ENCODE measurements at regions of chr1 and their contacts with region 1.

Region 1: GRCh38 chr1:160618763-160619274 is 28.0 kb downstream of the SLAMF1 start:
- DNase-seq: peak in 5 of 9 experiments; percentile 39 to 74 (median 43)
- ATAC-seq: peak; percentile 69
- H3K4me3 ChIP-seq: no peak overlapping the region
- H3K4me3 Mint-ChIP-seq: no peak overlapping the region
- H3K27ac ChIP-seq: no peak overlapping the region
- H3K27ac Mint-ChIP-seq: peak overlapping the region; percentile 49
- H3K4me1 ChIP-seq: peaks cover 13% of the 10 kb centered on the region
- H3K4me1 Mint-ChIP-seq: peaks cover 51% of the 10 kb centered on the region
- H3K27me3 ChIP-seq: no peaks in the 10 kb centered on the region
- H3K27me3 Mint-ChIP-seq: no peaks in the 10 kb centered on the region
- CTCF ChIP-seq: peak; percentile 77

Region 2: DNA sequence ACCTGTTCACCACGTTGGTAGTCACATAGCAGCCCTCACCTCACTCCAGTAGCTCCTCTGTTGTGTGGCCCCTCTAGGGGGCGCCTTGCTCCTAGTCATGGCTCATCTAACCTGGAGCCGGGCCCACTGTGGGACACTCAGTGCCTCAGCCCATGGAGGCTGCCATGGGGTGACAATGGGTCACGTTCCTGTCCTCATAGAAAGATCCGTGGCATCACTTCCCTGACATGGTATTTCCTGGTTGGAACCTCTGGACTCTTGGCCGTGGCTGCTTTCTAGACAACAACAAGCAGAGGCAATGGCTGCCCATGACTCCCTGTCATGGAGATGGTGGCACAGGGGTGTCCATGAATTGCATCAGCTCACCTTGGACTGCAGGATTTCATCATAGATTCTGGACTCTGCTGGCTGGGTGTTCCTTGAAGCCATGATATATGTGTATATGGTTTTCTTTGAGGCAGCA is 68.2 kb before region 1 on chr1:
- CTCF ChIA-PET with region 1: interaction called, 12 read pairs
- POLR2A ChIA-PET with region 1: no interaction called
- intact Hi-C with region 1: no loop called
- DNase-seq: peak; percentile 25 to 80 (median 67)
- ATAC-seq: peak; percentile 78
- H3K4me3 ChIP-seq: no peak overlapping the region
- H3K4me3 Mint-ChIP-seq: no peak overlapping the region
- H3K27ac ChIP-seq: peak overlapping the region in 1 of 2 experiments; percentile 13
- H3K27ac Mint-ChIP-seq: peak overlapping the region; percentile 13
- H3K4me1 ChIP-seq: no peaks in the 10 kb centered on the region
- H3K4me1 Mint-ChIP-seq: peaks cover 32% of the 10 kb centered on the region
- H3K27me3 ChIP-seq: no peaks in the 10 kb centered on the region
- H3K27me3 Mint-ChIP-seq: no peaks in the 10 kb centered on the region
- CTCF ChIP-seq: peak; percentile 51

Region 3: DNA sequence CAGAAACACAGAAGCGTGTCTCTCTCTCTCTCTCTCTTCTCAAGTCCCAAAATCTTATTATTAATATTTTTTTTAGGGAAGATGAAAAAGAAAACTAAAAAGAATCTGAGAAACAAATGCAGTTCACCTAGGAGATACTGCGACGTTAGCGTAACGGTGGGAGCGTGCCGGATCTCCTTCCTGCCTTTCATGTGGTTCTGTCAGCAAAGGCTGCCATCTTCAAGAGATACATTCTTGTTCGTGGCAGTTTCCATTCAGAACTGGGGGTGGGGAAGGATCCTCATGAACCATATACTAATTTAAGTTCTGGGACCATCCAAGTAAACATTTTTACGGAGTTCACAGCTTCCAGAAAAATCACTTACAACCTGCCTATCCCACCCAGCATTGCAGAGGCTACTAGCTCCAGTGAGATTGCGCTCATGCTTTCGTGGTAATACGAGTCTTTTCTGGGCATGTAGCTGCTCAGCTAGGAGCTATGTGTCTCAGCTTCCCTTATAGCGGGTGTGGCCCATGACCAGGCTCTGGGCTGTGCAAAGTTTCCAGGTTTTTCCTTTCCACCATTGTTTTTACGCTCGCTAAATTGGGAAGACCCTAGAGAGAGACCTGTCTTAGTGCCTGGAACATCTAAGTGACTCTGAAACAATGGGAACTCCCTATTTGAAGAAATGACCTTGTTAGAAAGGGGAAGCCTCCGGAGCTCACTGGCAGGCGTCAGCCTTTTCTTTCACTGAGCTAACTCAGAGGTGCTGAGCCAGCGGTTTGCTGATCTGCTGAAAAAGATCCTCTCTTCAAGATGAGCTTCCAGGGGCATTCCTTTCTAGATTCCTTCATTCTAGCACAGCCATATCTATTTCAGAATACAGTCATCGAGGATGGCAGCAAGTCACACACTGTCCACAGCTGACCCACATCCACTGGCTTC is 10.7 kb after region 1 on chr1:
- CTCF ChIA-PET with region 1: interaction called, 16 read pairs
- POLR2A ChIA-PET with region 1: interaction called, 3 read pairs
- intact Hi-C with region 1: no loop called
- DNase-seq: peak; percentile 53 to 92 (median 75)
- ATAC-seq: peak; percentile 81
- H3K4me3 ChIP-seq: peak overlapping the region; percentile 19 to 38
- H3K4me3 Mint-ChIP-seq: peak overlapping the region; percentile 76
- H3K27ac ChIP-seq: peak overlapping the region; percentile 91 to 95
- H3K27ac Mint-ChIP-seq: peak overlapping the region; percentile 97
- H3K4me1 ChIP-seq: peaks cover 91% of the 10 kb centered on the region
- H3K4me1 Mint-ChIP-seq: peaks cover 99% of the 10 kb centered on the region
- H3K27me3 ChIP-seq: no peaks in the 10 kb centered on the region
- H3K27me3 Mint-ChIP-seq: no peaks in the 10 kb centered on the region
- CTCF ChIP-seq: no peak

Region 4: DNA sequence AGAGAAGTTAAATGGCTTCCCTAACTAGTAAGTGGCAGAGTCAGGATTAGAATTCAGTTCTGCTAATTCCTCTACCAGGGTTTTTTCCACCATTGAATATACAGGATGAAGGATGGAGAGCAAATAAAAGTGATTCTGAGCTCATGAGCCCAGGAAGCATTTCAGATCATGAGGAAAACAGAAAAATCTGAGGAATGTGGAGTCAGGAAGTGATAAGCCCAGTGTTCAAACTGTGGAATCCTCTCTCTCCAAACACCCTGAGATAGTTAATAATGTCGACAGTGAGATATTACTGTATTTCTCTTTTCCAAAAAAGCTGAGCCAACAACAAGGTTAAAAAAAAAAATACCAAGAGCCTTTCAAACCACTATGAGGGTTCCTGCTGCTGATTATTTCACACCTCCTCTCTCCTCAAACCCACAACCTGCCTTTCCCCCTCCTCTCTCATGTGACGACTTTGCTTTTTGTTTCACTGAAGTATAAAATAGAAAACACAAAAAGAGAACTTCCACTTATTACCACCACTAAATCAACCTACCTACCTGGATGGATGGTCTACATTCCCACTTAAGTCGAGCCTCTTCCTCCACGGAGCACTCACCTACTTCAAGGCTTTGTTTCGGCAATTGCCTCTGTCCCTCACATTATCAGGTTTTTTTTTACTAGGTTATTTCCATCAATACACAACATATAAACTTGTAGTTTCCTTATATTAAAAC is 19.2 kb after region 1 on chr1:
- CTCF ChIA-PET with region 1: interaction called, 10 read pairs
- POLR2A ChIA-PET with region 1: interaction called, 7 read pairs
- intact Hi-C with region 1: loop called (anchors 2 kb)
- DNase-seq: peak in 7 of 9 experiments; percentile 39 to 91 (median 62)
- ATAC-seq: peak; percentile 69
- H3K4me3 ChIP-seq: peak overlapping the region; percentile 9 to 18
- H3K4me3 Mint-ChIP-seq: peak overlapping the region; percentile 78
- H3K27ac ChIP-seq: peak overlapping the region; percentile 20 to 69
- H3K27ac Mint-ChIP-seq: peak overlapping the region; percentile 95
- H3K4me1 ChIP-seq: peaks cover 91% of the 10 kb centered on the region
- H3K4me1 Mint-ChIP-seq: peaks cover 96% of the 10 kb centered on the region
- H3K27me3 ChIP-seq: no peaks in the 10 kb centered on the region
- H3K27me3 Mint-ChIP-seq: no peaks in the 10 kb centered on the region
- CTCF ChIP-seq: no peak

Region 5: GRCh38 chr1:160646711-160647328 is 28.0 kb after region 1 on chr1 and contains the start of gene SLAMF1:
- CTCF ChIA-PET with region 1: interaction called, 21 read pairs
- POLR2A ChIA-PET with region 1: interaction called, 7 read pairs
- intact Hi-C with region 1: loop called (anchors 2 kb)
- DNase-seq: peak in 5 of 9 experiments; percentile 34 to 71 (median 52)
- ATAC-seq: peak; percentile 74
- H3K4me3 ChIP-seq: peak within 1 kb of the TSS; percentile 51 to 60
- H3K4me3 Mint-ChIP-seq: peak within 1 kb of the TSS; percentile 87
- H3K27ac ChIP-seq: peak within 1 kb of the TSS; percentile 57 to 58
- H3K27ac Mint-ChIP-seq: peak within 1 kb of the TSS; percentile 88
- H3K4me1 ChIP-seq: peaks cover 73% of the 10 kb centered on the region
- H3K4me1 Mint-ChIP-seq: peaks cover 89% of the 10 kb centered on the region
- H3K27me3 ChIP-seq: no peaks in the 10 kb centered on the region
- H3K27me3 Mint-ChIP-seq: no peaks in the 10 kb centered on the region
- CTCF ChIP-seq: no peak
- total RNA-seq, gene SLAMF1: 12.8 to 18.6 TPM

Region 6: GRCh38 chr1:160653620-160654016 is 34.8 kb after region 1 on chr1:
- CTCF ChIA-PET with region 1: interaction called, 4 read pairs
- POLR2A ChIA-PET with region 1: no interaction called
- intact Hi-C with region 1: loop called in 1 of 2 experiments (anchors 5 kb)
- DNase-seq: no peak
- ATAC-seq: no peak
- H3K4me3 ChIP-seq: no peak overlapping the region
- H3K4me3 Mint-ChIP-seq: no peak overlapping the region
- H3K27ac ChIP-seq: no peak overlapping the region
- H3K27ac Mint-ChIP-seq: no peak overlapping the region
- H3K4me1 ChIP-seq: peaks cover 39% of the 10 kb centered on the region
- H3K4me1 Mint-ChIP-seq: peaks cover 79% of the 10 kb centered on the region
- H3K27me3 ChIP-seq: no peaks in the 10 kb centered on the region
- H3K27me3 Mint-ChIP-seq: no peaks in the 10 kb centered on the region
- CTCF ChIP-seq: no peak

Region 7: DNA sequence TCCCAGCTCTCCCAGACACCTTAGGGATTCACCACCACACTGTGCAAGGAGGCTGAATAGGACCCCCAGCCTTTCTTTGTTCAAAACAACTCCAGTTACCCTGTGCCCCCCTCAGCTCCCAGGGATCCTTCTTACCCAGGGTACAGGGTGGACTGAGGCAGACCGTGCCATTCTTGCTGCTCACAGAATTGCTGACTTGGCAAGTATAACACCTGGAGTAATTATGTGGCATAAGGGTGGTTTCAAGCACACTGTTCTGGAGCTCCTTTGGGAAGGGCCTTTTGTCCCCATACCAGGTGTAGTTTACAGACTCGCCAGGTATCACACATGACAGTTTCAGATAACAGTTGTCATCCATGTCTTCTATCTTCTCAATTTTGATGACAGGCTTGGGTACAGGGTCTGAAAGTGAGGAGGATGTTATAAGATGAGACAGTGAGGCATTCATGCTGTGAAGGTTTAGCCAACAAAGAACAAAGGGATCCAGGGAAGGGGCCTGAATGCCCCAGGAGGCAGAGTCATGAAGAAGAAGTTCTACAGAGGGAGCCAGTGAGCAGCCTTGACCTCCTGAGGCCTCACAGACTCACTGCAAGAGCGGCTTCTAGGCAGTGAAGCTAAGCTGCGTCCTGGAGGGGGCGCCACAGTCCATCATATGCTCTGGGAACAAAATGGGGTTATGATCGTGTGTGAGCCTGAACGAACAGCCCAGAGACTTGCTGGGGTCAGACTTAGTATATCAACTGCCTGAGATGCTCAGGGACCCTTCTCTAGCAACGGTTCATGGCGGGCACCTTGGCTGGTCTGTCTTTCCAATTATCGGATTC is 62.5 kb after region 1 on chr1:
- CTCF ChIA-PET with region 1: interaction called, 75 read pairs
- POLR2A ChIA-PET with region 1: interaction called, 4 read pairs
- intact Hi-C with region 1: no loop called
- DNase-seq: peak; percentile 75 to 93 (median 91)
- ATAC-seq: peak; percentile 91
- H3K4me3 ChIP-seq: no peak overlapping the region
- H3K4me3 Mint-ChIP-seq: no peak overlapping the region
- H3K27ac ChIP-seq: peak overlapping the region; percentile 1 to 71
- H3K27ac Mint-ChIP-seq: peak overlapping the region; percentile 85
- H3K4me1 ChIP-seq: peaks cover 52% of the 10 kb centered on the region
- H3K4me1 Mint-ChIP-seq: peaks cover 54% of the 10 kb centered on the region
- H3K27me3 ChIP-seq: no peaks in the 10 kb centered on the region
- H3K27me3 Mint-ChIP-seq: no peaks in the 10 kb centered on the region
- CTCF ChIP-seq: peak; percentile 82

Region 8: GRCh38 chr1:161676958-161677689 is 1058.3 kb after region 1 on chr1:
- CTCF ChIA-PET with region 1: no interaction called
- POLR2A ChIA-PET with region 1: no interaction called
- intact Hi-C with region 1: no loop called
- DNase-seq: no peak
- ATAC-seq: no peak
- H3K4me3 ChIP-seq: no peak overlapping the region
- H3K4me3 Mint-ChIP-seq: no peak overlapping the region
- H3K27ac ChIP-seq: no peak overlapping the region
- H3K27ac Mint-ChIP-seq: no peak overlapping the region
- H3K4me1 ChIP-seq: no peaks in the 10 kb centered on the region
- H3K4me1 Mint-ChIP-seq: no peaks in the 10 kb centered on the region
- H3K27me3 ChIP-seq: peaks cover 0 to 3% of the 10 kb centered on the region in 2 experiments
- H3K27me3 Mint-ChIP-seq: peaks cover 4% of the 10 kb centered on the region
- CTCF ChIP-seq: no peak

Measured in CD8-positive, alpha-beta T cell (primary cell).